Thyroid gland (tissue), 4 donors: ENCODE measurements at regions of chr5 and their contacts with region 1.

Region 1: GRCh38 chr5:141628175-141628788 is 8.4 kb downstream of the HDAC3 start:
- DNase-seq: no peak
- H3K4me3 ChIP-seq: no peak overlapping the region
- H3K27ac ChIP-seq: no peak overlapping the region
- H3K4me1 ChIP-seq: no peaks in the 10 kb centered on the region
- H3K27me3 ChIP-seq: no peaks in the 10 kb centered on the region
- CTCF ChIP-seq: no peak
- POLR2A ChIP-seq: no peak

Region 2: GRCh38 chr5:141338538-141339306 is 289.6 kb before region 1 on chr5 and contains the start of gene PCDHGA2:
- intact Hi-C with region 1: no loop called
- DNase-seq: peak in 1 of 2 donors; percentile 21
- H3K4me3 ChIP-seq: peak within 1 kb of the TSS in 1 of 3 donors; percentile 16
- H3K27ac ChIP-seq: no peak within 1 kb of the TSS
- H3K4me1 ChIP-seq: no peaks in the 10 kb centered on the region
- H3K27me3 ChIP-seq: no peaks in the 10 kb centered on the region
- CTCF ChIP-seq: peak in 4 of 6 experiments; percentile 26 to 42 (median 40)
- POLR2A ChIP-seq: no peak
- total RNA-seq, gene PCDHGA2: 4.3 to 6.4 (median 5.6) TPM

Region 3: GRCh38 chr5:141590127-141590526 is 38.2 kb before region 1 on chr5:
- intact Hi-C with region 1: loop called (anchors 5 kb)
- DNase-seq: no peak
- H3K4me3 ChIP-seq: no peak overlapping the region
- H3K27ac ChIP-seq: no peak overlapping the region
- H3K4me1 ChIP-seq: peaks cover 4% of the 10 kb centered on the region in 2 donors
- H3K27me3 ChIP-seq: no peaks in the 10 kb centered on the region
- CTCF ChIP-seq: no peak
- POLR2A ChIP-seq: no peak